ENCODE measurements at regions of chr3 and their contacts with region 1.

Region 1: DNA sequence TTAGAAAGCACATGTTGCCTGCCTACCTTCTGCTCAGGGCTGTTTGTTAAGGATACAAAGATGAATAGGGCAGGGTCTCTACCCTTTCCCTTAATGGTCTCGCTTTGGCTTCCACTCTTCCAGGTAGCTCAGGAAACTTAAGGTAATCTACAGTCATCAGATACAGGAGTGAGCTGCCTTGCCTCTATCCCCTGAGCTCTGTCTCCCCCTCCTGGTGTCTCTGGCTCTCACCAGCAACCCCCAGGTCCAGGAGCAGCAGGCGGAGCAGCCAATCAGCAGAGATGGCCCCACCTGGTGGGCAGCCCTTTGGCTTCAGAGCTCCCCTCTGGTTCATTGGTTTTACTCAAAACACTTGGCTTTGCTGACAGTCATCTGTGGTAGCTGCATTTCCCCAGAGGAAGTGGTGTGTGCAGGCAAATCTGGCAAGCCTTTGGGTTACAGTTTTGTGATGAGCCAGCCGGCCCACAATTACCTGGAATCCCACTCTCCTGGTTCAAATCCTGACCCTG is 8.5 kb upstream of the CX3CR1 start:
- DNase-seq: peak; percentile 91
- ATAC-seq: peak; percentile 96
- H3K4me3 Mint-ChIP-seq: no peak overlapping the region
- H3K27ac Mint-ChIP-seq: peak overlapping the region; percentile 0
- H3K4me1 Mint-ChIP-seq: peaks cover 46% of the 10 kb centered on the region
- H3K27me3 Mint-ChIP-seq: peaks cover 3% of the 10 kb centered on the region

Region 2: GRCh38 chr3:39000008-39000450 is 288.3 kb before region 1 on chr3:
- CTCF ChIA-PET with region 1: interaction called, 48 read pairs
- POLR2A ChIA-PET with region 1: no interaction called
- DNase-seq: no peak
- ATAC-seq: peak; percentile 81
- H3K4me3 Mint-ChIP-seq: no peak overlapping the region
- H3K27ac Mint-ChIP-seq: no peak overlapping the region
- H3K4me1 Mint-ChIP-seq: no peaks in the 10 kb centered on the region
- H3K27me3 Mint-ChIP-seq: peaks cover 11% of the 10 kb centered on the region

Region 3: GRCh38 chr3:39126532-39127071 is 161.8 kb before region 1 on chr3:
- CTCF ChIA-PET with region 1: interaction called, 148 read pairs
- POLR2A ChIA-PET with region 1: interaction called, 4 read pairs
- DNase-seq: peak; percentile 52
- ATAC-seq: peak; percentile 41
- H3K4me3 Mint-ChIP-seq: no peak overlapping the region
- H3K27ac Mint-ChIP-seq: no peak overlapping the region
- H3K4me1 Mint-ChIP-seq: peaks cover 28% of the 10 kb centered on the region
- H3K27me3 Mint-ChIP-seq: peaks cover 21% of the 10 kb centered on the region

Region 4: DNA sequence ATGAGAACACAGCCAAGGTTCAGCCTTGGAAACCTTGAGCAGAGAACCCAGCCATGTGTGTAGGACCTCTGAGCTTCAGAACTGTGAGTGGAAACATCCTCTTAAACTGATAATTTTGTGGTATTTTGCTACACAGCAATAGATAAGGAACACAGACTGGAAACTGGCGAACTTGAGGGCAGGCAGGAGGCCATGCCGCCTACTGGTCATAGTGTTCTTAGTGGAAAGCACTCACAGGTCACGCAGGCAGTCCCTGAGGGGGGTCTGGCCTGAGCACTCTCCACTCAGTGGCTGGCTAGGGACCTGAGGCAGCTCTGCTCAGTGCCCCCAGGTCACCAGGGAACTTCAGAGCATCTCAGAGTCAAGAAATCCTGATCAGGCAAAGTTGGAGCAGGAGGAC is 86.3 kb before region 1 on chr3:
- CTCF ChIA-PET with region 1: interaction called, 483 read pairs
- POLR2A ChIA-PET with region 1: interaction called, 4 read pairs
- DNase-seq: no peak
- ATAC-seq: peak; percentile 42
- H3K4me3 Mint-ChIP-seq: no peak overlapping the region
- H3K27ac Mint-ChIP-seq: no peak overlapping the region
- H3K4me1 Mint-ChIP-seq: no peaks in the 10 kb centered on the region
- H3K27me3 Mint-ChIP-seq: peaks cover 28% of the 10 kb centered on the region

Region 5: GRCh38 chr3:39249453-39250115 is 38.8 kb before region 1 on chr3:
- CTCF ChIA-PET with region 1: interaction called, 12 read pairs
- POLR2A ChIA-PET with region 1: no interaction called
- DNase-seq: peak; percentile 13
- ATAC-seq: no peak
- H3K4me3 Mint-ChIP-seq: no peak overlapping the region
- H3K27ac Mint-ChIP-seq: no peak overlapping the region
- H3K4me1 Mint-ChIP-seq: no peaks in the 10 kb centered on the region
- H3K27me3 Mint-ChIP-seq: peaks cover 14% of the 10 kb centered on the region

Region 6: GRCh38 chr3:39323494-39323893 is 35.1 kb after region 1 on chr3:
- CTCF ChIA-PET with region 1: interaction called, 18 read pairs
- POLR2A ChIA-PET with region 1: no interaction called
- DNase-seq: no peak
- ATAC-seq: no peak
- H3K4me3 Mint-ChIP-seq: no peak overlapping the region
- H3K27ac Mint-ChIP-seq: no peak overlapping the region
- H3K4me1 Mint-ChIP-seq: peaks cover 60% of the 10 kb centered on the region
- H3K27me3 Mint-ChIP-seq: peaks cover 8% of the 10 kb centered on the region

Region 7: GRCh38 chr3:39378088-39378487 is 89.7 kb after region 1 on chr3:
- CTCF ChIA-PET with region 1: interaction called, 238 read pairs
- POLR2A ChIA-PET with region 1: interaction called, 7 read pairs
- DNase-seq: peak; percentile 74
- ATAC-seq: peak; percentile 76
- H3K4me3 Mint-ChIP-seq: no peak overlapping the region
- H3K27ac Mint-ChIP-seq: no peak overlapping the region
- H3K4me1 Mint-ChIP-seq: peaks cover 11% of the 10 kb centered on the region
- H3K27me3 Mint-ChIP-seq: peaks cover 2% of the 10 kb centered on the region

Measured in activated CD8-positive, alpha-beta T cell treated with anti-CD3 and anti-CD28 coated beads, Interleukin-2, amount 10 ng/mL, durations not matched to agents 7 days and 5 days (primary cell).